ENCODE measurements at regions of chr12 and their contacts with region 1.

Region 1: DNA sequence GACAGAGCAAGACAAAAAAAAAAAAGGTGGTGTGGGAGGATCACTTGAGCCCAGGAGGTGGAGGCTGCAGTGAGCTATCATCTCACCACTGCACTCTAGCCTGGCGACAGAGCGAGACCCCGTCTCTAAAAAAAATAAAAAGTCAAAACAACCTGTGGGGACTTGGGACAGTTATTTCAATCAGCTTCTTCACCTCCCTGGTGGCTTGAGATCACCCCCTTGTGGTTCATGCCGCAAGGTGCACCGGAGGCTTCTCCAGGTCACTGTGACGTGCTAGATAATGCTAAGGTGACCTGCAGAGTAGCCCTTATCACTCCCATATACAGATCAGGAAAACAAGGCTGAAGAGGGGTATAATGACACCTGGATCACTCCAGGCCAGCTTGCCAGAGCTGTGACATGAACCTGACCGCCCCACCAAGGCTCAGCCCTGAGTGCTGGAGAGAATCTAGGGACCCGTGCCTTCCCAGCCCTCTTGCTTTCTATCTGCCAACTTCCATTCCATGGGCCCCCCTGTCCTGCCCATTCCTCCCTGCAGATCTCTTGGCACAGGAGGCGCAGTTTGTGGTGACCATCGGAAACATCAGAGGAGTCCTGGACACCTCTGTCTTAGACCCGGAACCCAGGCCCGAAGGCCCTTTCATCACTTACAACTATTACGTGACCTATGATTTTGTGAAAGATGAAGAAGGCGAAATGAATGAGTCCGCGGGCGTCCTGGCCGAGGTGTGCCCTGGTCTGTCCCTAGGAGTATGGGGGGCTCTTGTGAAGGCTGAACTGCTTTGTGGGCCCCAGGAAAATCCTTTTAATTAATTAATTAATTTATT is 8.1 kb downstream of the LRRC43 start:
- DNase-seq: peak; percentile 89
- CTCF ChIP-seq: peak; percentile 83

Region 2: GRCh38 chr12:121894633-121895032 is 296.4 kb before region 1 on chr12:
- in situ Hi-C with region 1: no loop called
- DNase-seq: no peak
- CTCF ChIP-seq: no peak

Region 3: DNA sequence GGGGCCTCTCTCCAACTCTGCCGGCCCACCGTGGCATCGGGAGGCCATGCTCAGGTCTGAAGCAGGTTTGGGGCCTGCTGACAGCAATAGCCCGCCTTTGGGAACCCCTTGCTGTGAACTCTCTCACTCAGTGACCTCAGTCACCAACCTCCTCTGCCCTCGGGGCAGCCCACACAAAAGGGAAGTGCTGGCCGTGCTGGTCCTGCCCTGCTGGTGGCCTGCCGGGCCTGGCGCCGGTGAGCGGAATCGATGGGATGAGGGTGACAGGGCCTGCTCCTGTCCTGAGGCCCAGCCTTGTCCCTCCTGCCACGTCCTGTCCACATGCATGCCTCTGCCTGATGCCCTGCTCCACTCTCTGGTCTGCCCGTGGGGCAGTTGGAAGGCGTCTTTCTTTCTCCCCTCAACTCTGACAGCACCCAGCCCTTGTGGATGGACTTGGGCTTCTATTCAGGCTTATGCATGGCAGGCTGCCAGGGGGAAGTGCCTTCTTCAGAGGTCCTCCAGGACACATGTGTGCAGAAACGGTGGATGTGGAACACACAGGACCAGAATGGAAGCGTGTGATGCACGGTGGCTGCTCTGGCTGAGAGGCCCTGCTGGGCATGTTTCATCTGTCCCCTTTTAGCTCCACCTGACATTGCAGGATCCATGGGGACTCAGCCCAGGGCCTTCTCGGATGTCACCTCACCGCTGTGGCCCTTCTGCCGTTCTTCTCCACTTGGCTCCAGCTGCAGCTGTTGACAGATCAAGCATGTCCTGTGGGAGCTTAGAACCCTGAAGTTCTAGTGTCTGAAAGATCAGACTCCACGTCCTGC is 48.9 kb before region 1 on chr12:
- in situ Hi-C with region 1: loop called (anchors 5 kb)
- DNase-seq: no peak
- CTCF ChIP-seq: no peak

Measured in GM13976 (cell line).